Vagina (tissue), 2 donors: ENCODE measurements at regions of chr15 and their contacts with region 1.

Region 1: GRCh38 chr15:85831415-85832113 is 36.8 kb upstream of the KLHL25 start:
- DNase-seq: no peak
- H3K4me3 ChIP-seq: no peak overlapping the region
- H3K27ac ChIP-seq: no peak overlapping the region
- H3K4me1 ChIP-seq: no peaks in the 10 kb centered on the region
- H3K27me3 ChIP-seq: no peaks in the 10 kb centered on the region
- CTCF ChIP-seq: peak; percentile 12 to 60 (median 47)
- POLR2A ChIP-seq: no peak

Region 2: DNA sequence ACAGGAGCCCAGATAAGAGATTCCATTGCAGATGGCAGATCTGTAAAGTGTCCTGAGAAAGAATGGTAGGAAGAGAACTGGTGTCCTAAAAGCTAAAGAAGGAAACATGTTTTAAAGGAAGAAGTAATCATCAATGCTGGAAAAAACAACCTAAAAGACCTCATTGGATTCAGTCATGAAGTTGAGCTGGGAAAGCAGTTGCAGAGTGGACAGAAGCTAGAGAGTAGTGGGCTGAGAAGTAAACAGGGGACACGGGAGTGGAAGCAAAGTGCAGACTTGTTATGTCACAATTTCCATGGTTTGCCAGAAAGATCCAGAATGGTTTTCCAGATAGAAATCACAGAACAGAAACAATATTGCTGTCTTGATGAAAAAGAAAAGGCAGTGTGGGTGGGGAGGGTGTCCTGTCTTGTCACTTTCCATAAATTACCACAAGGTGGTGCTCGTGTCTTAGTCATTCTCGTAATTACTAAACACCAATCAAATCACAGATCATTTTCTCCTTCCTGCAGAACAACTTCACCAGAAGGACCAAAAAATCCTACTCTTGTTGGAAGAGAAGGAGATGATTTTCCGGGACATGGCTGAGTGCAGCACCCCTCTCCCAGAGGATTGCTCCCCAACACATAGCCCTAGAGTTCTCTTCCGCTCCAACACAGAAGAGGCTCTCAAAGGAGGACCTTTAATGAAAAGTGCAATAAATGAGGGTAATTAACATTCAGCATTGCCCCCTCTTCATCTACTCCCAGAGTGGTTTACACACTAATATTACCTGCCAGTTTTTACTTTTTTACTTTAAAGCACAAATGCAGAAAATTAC is 101.4 kb before region 1 on chr15:
- intact Hi-C with region 1: loop called (anchors 5 kb)
- DNase-seq: no peak
- H3K4me3 ChIP-seq: no peak overlapping the region
- H3K27ac ChIP-seq: peak overlapping the region; percentile 77
- H3K4me1 ChIP-seq: peaks cover 28% of the 10 kb centered on the region
- H3K27me3 ChIP-seq: no peaks in the 10 kb centered on the region
- CTCF ChIP-seq: peak; percentile 50 to 70 (median 59)
- POLR2A ChIP-seq: no peak

Region 3: GRCh38 chr15:85760531-85761371 is 70.8 kb before region 1 on chr15:
- intact Hi-C with region 1: no loop called
- DNase-seq: no peak
- H3K4me3 ChIP-seq: no peak overlapping the region
- H3K27ac ChIP-seq: no peak overlapping the region
- H3K4me1 ChIP-seq: peaks cover 12% of the 10 kb centered on the region
- H3K27me3 ChIP-seq: no peaks in the 10 kb centered on the region
- CTCF ChIP-seq: no peak
- POLR2A ChIP-seq: no peak

Region 4: GRCh38 chr15:87118435-87118834 is 1286.9 kb after region 1 on chr15:
- intact Hi-C with region 1: no loop called
- DNase-seq: no peak
- H3K4me3 ChIP-seq: no peak overlapping the region
- H3K27ac ChIP-seq: no peak overlapping the region
- H3K4me1 ChIP-seq: no peaks in the 10 kb centered on the region
- H3K27me3 ChIP-seq: no peaks in the 10 kb centered on the region
- CTCF ChIP-seq: no peak
- POLR2A ChIP-seq: no peak

Region 5: GRCh38 chr15:87267798-87268197 is 1436.2 kb after region 1 on chr15:
- intact Hi-C with region 1: no loop called
- DNase-seq: no peak
- H3K4me3 ChIP-seq: no peak overlapping the region
- H3K27ac ChIP-seq: no peak overlapping the region
- H3K4me1 ChIP-seq: no peaks in the 10 kb centered on the region
- H3K27me3 ChIP-seq: no peaks in the 10 kb centered on the region
- CTCF ChIP-seq: no peak
- POLR2A ChIP-seq: no peak